Right ventricle myocardium inferior (tissue), 1 donor: ENCODE measurements at regions of chr2 and their contacts with region 1.

Region 1: GRCh38 chr2:144516981-144517865 is 2.7 kb downstream of the ZEB2 start:
- DNase-seq: peak; percentile 83
- ATAC-seq: peak; percentile 40

Region 2: DNA sequence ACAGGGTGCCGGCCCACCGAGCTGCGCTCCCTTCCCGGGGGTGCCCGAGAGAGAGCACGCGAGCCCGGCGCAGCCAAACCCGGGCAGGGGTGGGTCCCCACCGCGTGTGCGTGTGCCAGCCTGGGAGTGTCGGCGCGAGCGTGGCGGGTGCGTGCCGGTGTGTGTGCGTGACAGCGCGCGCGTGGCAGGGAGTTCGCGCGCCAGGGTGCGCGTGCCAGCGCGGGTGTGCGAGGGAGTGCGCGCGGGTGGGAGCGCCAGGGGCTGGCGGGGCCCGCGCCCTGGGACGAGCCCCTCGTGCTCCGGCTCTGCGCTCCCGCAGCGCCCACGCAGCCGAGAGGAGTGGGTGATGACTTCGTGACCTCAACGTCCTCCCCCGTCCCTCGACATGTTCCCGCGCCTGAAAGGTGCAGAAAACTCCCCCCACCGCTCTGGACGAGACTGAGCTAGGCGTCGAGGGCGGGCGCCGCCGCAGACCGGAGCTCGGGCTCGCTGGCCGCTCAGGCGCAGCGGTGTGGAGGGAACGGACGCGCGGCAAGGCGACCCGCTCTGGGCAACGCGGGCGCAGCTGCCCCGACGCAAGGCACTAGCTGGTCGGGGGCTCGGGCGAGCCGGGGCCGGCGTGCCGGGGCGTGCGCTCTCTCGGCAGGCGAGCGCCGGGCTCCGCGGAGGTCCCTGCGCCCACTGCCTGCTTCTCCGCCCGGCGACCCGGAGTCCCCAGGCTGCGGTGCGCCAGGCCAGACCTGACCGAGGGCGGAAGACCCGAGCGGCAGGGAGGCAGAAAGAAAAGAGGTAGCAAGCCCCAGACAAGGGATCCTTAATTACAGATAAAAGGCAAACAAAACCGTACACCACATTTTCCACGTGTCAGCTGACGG is 580.1 kb before region 1 on chr2:
- intact Hi-C with region 1: loop called (anchors 10 kb)
- DNase-seq: peak; percentile 80
- ATAC-seq: peak; percentile 80

Region 3: DNA sequence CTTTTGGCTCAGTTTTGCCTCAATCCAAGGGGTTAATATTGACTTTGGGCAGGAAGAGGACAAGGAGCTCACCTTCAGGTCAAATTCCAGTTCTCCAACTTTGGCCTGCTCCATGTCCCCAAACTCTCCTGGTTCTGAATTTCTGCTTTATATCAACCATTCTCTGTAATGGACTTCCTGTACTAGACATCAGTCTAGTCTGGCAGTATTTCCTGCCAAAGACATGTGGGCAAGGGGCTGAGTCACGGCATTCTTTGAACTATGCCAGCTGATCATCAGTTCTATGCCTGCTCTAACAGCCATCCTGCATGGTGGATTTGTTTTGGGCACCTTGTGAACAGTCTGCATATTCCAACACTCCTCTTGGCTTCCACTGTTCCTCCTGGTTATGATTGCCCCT is 196.7 kb before region 1 on chr2:
- intact Hi-C with region 1: no loop called
- DNase-seq: no peak
- ATAC-seq: peak; percentile 26

Region 4: GRCh38 chr2:144402251-144402650 is 115.0 kb before region 1 on chr2:
- intact Hi-C with region 1: loop called (anchors 5 kb)
- DNase-seq: peak; percentile 79
- ATAC-seq: peak; percentile 9

Region 5: GRCh38 chr2:144479138-144479537 is 38.1 kb before region 1 on chr2:
- intact Hi-C with region 1: no loop called
- DNase-seq: no peak
- ATAC-seq: no peak

Region 6: DNA sequence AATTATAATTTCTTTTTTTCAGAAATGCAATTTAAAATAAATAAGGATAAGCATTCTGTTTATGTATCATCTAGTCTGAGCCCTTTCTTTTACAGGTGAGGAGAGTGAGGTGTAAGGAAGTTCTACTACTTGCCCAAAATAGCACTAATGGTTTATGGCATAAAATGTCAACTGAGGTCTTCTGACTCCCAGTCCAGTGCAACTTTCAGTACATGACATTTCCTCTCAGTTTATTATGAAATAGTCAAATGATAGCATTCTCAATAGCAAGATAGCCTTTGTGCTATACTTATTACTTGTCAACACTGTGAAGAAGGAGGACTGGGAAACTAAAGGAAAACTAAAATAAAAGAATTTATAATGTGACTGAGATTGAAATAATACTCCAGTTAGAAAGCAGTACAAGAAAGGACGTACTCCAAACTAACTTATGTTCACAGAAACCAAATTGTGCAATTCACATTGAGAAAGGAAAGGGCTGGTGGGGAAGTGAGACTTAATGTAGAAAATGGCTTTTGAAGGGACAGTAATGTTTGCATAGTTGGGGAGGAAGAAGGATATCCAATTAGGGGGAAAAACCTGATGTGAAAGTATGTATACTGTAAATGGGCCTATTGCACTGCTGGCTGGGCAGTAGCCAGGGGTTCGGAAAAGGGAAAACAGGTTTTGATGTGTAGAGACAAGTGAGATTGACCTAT is 169.4 kb after region 1 on chr2:
- intact Hi-C with region 1: no loop called
- DNase-seq: no peak
- ATAC-seq: peak; percentile 52

Region 7: GRCh38 chr2:144890828-144891227 is 373.6 kb after region 1 on chr2:
- intact Hi-C with region 1: loop called (anchors 5 kb)
- DNase-seq: no peak
- ATAC-seq: peak; percentile 33

Region 8: GRCh38 chr2:145199042-145199441 is 681.8 kb after region 1 on chr2:
- intact Hi-C with region 1: loop called (anchors 10 kb)
- DNase-seq: no peak
- ATAC-seq: peak; percentile 81